ENCODE measurements at regions of chr13 and their contacts with region 1.

Region 1: DNA sequence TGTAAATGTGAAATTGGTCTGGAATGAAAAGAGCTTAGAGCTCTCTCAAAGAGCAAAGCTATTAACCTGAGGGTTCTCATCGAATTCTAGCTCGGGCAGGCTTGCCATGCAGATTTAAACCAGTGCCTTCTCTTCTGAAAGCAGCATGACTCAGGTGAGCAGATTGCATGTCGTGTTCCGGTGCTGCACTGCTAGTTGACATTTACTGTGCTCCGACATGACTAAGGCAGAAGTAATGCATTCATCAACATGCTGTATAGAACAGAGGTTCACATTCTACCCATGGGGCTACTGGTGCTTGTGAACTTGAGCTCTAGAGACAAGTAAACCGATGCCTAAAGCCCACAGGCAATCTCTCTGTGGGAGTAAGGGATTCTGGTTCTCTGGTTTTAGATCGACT is 947.7 kb downstream of the EFNB2 start:
- DNase-seq: peak; percentile 48 to 59
- H3K4me3 ChIP-seq: no peak overlapping the region
- H3K27ac ChIP-seq: no peak overlapping the region
- H3K4me1 ChIP-seq: peaks cover 12% of the 10 kb centered on the region
- H3K27me3 ChIP-seq: no peaks in the 10 kb centered on the region
- CTCF ChIP-seq: no peak

Region 2: DNA sequence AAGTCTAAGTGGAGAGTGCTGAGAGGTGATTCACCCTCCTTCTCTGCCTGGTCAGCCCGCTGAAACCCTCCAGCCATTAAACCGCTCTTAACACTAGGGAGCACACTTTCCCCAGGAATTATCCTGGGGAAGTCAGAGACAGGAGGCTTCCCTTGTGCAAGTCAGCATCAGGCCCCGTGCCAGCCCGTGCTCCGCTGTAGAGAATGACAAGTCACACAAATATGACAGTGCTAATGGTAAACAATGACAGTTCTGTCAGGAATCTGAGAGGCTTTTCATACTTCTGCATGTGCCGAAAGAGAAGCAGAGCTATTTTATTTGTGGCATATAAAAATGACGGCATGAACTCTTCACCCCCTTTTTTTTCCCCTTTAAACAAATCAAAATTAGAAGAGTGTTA is 1704.6 kb before region 1 on chr13:
- CTCF ChIA-PET with region 1: no interaction called
- POLR2A ChIA-PET with region 1: no interaction called
- intact Hi-C with region 1: loop called (anchors 1 kb)
- DNase-seq: peak; percentile 91 to 98
- H3K4me3 ChIP-seq: no peak overlapping the region
- H3K27ac ChIP-seq: 0 out of 2 replicates have a peak overlapping the region, but pooled peaks have one; percentile 29
- H3K4me1 ChIP-seq: peaks cover 7% of the 10 kb centered on the region
- H3K27me3 ChIP-seq: no peaks in the 10 kb centered on the region
- CTCF ChIP-seq: peak; percentile 77

Region 3: DNA sequence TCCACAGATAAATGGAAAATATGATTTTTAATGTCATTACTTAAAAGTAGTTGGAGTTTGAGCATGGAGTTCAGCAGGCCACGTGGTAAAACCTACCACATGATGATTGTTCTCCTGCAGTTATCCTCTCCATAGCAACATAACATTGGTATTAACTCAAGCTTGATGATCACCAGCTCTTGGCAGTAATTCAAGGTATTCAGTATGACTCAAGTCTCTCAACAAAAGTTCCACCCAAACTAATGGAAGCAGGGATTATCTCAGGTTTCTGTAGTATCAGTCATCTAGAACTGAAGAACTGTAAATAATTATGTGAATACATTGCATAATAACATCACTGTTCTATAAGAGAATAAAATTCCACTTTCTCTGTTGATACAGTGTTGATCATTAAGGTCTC is 144.8 kb before region 1 on chr13:
- CTCF ChIA-PET with region 1: no interaction called
- POLR2A ChIA-PET with region 1: no interaction called
- intact Hi-C with region 1: loop called (anchors 5 kb)
- DNase-seq: peak; percentile 28 to 98
- H3K4me3 ChIP-seq: no peak overlapping the region
- H3K27ac ChIP-seq: peak overlapping the region; percentile 68
- H3K4me1 ChIP-seq: peaks cover 16% of the 10 kb centered on the region
- H3K27me3 ChIP-seq: no peaks in the 10 kb centered on the region
- CTCF ChIP-seq: no peak

Region 4: GRCh38 chr13:105773863-105774538 is 186.2 kb after region 1 on chr13:
- CTCF ChIA-PET with region 1: no interaction called
- POLR2A ChIA-PET with region 1: interaction called, 3 read pairs
- intact Hi-C with region 1: loop called (anchors 1 kb)
- DNase-seq: peak; percentile 76 to 99
- H3K4me3 ChIP-seq: peak overlapping the region; percentile 43
- H3K27ac ChIP-seq: peak overlapping the region; percentile 89
- H3K4me1 ChIP-seq: peaks cover 36% of the 10 kb centered on the region
- H3K27me3 ChIP-seq: no peaks in the 10 kb centered on the region
- CTCF ChIP-seq: no peak

Measured in PC-9 (cell line).